HCT116 (cell line): ENCODE measurements at regions of chr4 and their contacts with region 1.

Region 1: DNA sequence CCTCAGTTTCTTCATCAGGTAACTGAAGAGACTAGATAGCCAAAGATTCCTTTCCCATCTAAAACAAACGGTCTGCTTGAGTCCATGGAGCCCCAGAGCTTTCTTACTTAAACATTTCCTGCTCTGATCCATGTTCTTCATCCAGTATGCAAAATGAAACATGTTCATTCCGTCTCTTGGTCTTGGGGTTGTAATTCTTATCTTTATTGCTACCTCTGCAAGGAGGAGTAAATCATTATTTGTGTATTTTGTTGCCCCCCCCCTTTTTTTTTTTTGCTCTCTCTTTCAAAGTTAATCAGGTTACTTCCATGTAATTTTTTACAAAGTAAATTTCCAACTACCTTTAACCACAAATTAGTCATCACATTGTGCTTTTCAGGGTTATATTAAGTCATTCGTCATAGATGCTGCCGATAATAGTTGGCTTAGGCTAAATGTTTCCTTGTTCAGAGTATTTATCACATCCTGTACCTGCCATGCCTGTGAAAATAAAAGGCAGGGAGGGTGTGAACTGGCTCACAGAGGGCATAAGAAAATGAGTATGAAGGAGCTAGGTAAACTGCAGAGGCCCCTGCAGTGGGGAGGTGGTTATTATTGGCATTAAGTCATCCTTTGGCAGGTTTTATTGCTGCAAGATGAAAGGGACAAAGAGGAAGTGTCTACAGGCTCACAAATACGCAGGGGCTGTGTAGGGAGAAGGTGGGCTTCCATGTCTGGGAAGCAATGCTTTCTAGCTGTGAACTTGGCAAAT is 76.7 kb upstream of the HS3ST1 start:
- DNase-seq: peak; percentile 99
- ATAC-seq: peak; percentile 89
- H3K4me3 ChIP-seq: no peak overlapping the region
- H3K27ac ChIP-seq: peak overlapping the region; percentile 88
- H3K4me1 ChIP-seq: peaks cover 53 to 58% of the 10 kb centered on the region in 2 experiments
- H3K27me3 ChIP-seq: no peaks in the 10 kb centered on the region
- CTCF ChIP-seq: no peak
- POLR2A ChIP-seq: no peak
- RAD21 ChIP-seq: no peak

Region 2: GRCh38 chr4:11535333-11535732 is 29.9 kb after region 1 on chr4:
- CTCF ChIA-PET with region 1: no interaction called
- POLR2A ChIA-PET with region 1: interaction called, 11 read pairs
- RAD21 ChIA-PET with region 1: no interaction called
- intact Hi-C with region 1: no loop called
- DNase-seq: no peak
- ATAC-seq: peak; percentile 74
- H3K4me3 ChIP-seq: no peak overlapping the region
- H3K27ac ChIP-seq: peak overlapping the region; percentile 56
- H3K4me1 ChIP-seq: peaks cover 39 to 73% of the 10 kb centered on the region in 2 experiments; a peak in 3 of 4 replicates
- H3K27me3 ChIP-seq: no peaks in the 10 kb centered on the region
- CTCF ChIP-seq: peak in 2 of 3 experiments; percentile 25 to 39; a peak in 2 of 6 replicates
- POLR2A ChIP-seq: no peak
- RAD21 ChIP-seq: peak; percentile 25; the same call in 1 of the 2 replicates

Region 3: DNA sequence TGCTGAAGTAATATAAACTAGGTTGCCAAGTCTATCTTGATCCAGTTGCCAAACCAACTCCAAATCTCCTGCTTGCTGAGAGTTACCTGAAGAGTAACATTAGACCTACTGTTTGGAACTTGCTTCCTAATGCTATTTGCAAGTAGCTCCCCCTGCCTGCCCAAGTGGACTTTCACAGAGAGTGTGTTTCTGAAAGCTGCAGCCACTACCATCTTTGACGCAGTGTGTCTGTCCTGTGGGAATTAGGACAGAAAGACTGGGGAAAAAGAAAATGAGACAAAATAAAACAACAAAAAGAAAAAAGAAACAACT is 118.3 kb after region 1 on chr4:
- CTCF ChIA-PET with region 1: no interaction called
- POLR2A ChIA-PET with region 1: interaction called, 41 read pairs
- RAD21 ChIA-PET with region 1: interaction called in 1 of 2 experiments, 3 read pairs
- intact Hi-C with region 1: loop called (anchors 2 kb)
- DNase-seq: no peak
- ATAC-seq: peak; percentile 49
- H3K4me3 ChIP-seq: no peak overlapping the region
- H3K27ac ChIP-seq: peak overlapping the region; percentile 94
- H3K4me1 ChIP-seq: peaks cover 58 to 87% of the 10 kb centered on the region in 2 experiments
- H3K27me3 ChIP-seq: no peaks in the 10 kb centered on the region
- CTCF ChIP-seq: peak in 2 of 3 experiments; percentile 63 to 67; a peak in 4 of 6 replicates
- POLR2A ChIP-seq: no peak
- RAD21 ChIP-seq: no peak

Region 4: DNA sequence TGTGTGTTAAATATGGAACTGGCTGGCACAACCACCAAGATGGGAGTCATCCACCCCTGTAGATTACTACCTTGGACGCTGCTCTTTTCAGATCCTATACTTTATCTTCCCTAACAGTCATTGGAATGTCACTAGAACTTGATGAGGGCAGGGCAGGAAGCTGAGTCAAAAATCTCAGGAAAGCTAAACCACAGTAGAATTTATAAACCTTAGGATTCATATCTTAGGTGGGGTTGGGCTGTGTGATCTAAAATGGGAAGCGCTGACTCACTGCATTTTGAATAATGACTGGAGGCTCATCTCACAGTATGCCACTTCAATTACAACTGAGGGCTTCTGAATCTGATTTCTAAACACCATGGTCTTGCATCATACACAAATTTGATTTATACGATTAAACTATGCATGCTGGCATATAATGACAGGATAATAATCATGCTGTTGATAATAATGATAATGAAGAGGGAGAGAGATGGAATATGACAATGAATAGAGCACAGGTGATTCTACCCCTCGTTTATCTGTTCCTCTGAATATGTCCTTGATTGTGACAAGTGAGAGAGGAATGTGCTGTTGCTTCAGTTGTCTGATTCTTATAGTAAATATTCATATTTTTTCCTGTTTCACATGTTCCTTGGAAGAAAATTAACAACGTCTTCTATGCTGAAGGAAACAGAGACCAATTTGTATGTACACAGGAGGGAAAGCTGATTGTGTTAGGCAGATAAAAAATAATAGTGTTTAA is 193.6 kb after region 1 on chr4:
- CTCF ChIA-PET with region 1: interaction called, 3 read pairs
- POLR2A ChIA-PET with region 1: interaction called, 3 read pairs
- RAD21 ChIA-PET with region 1: no interaction called
- intact Hi-C with region 1: loop called (anchors 2 kb)
- DNase-seq: peak; percentile 95
- ATAC-seq: peak; percentile 87
- H3K4me3 ChIP-seq: peak overlapping the region in 1 of 2 experiments; percentile 3; a peak in 1 of 4 replicates
- H3K27ac ChIP-seq: peak overlapping the region; percentile 97
- H3K4me1 ChIP-seq: peaks cover 51 to 81% of the 10 kb centered on the region in 2 experiments
- H3K27me3 ChIP-seq: no peaks in the 10 kb centered on the region
- CTCF ChIP-seq: no peak
- POLR2A ChIP-seq: peak; percentile 22
- RAD21 ChIP-seq: peak; percentile 37; the same call in 1 of the 2 replicates

Region 5: DNA sequence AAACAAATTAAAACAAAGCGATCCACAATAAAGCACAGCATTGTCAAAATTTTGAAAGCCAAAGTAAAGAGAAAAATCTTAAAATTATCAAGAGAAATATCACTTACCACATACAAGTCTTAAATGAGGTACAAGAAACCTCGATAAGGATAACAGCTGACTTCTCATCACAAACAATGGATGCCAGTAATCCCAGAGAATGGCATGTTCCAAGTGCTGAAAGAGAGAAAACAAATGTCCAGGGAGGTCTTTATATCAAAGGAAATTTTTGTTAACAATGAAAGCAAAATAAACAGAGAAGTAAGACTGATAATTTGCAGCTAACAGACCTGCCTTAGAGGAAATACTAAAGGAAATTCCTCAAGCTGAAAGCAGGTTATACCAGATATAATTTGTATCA is 383.7 kb after region 1 on chr4:
- CTCF ChIA-PET with region 1: no interaction called
- POLR2A ChIA-PET with region 1: no interaction called
- RAD21 ChIA-PET with region 1: no interaction called
- intact Hi-C with region 1: no loop called
- DNase-seq: no peak
- ATAC-seq: no peak
- H3K4me3 ChIP-seq: no peak overlapping the region
- H3K27ac ChIP-seq: no peak overlapping the region
- H3K4me1 ChIP-seq: no peaks in the 10 kb centered on the region
- H3K27me3 ChIP-seq: no peaks in the 10 kb centered on the region
- CTCF ChIP-seq: no peak
- POLR2A ChIP-seq: no peak
- RAD21 ChIP-seq: no peak

Region 6: DNA sequence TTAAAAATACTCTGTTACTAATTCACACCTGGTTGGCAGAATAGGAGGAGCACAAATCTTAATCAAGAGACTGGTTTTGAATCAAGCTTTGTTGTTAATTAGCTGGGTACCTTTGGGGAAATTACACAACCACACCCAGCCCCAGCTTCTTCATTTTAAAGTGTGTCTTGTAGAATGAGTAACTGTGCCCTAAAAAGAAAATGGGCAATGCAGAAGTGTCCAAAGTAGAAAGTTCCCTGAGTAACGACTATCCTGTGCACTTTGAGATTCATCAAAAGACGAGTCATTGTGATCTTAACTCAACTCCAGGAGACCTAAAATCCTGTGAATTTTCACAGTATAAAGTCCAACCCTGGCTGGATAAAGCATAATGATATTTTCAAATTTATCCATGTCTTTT is 715.6 kb after region 1 on chr4:
- CTCF ChIA-PET with region 1: no interaction called
- POLR2A ChIA-PET with region 1: no interaction called
- RAD21 ChIA-PET with region 1: no interaction called
- intact Hi-C with region 1: no loop called
- DNase-seq: no peak
- ATAC-seq: no peak
- H3K4me3 ChIP-seq: no peak overlapping the region
- H3K27ac ChIP-seq: no peak overlapping the region
- H3K4me1 ChIP-seq: no peaks in the 10 kb centered on the region
- H3K27me3 ChIP-seq: no peaks in the 10 kb centered on the region
- CTCF ChIP-seq: no peak
- POLR2A ChIP-seq: no peak
- RAD21 ChIP-seq: no peak